HEK293T (cell line): ENCODE measurements at regions of chr7 and their contacts with region 1.

Region 1: GRCh38 chr7:151232091-151232916 is at the start of gene CHPF2:
- DNase-seq: peak; percentile 97

Region 2: GRCh38 chr7:151251328-151251972 is 19.1 kb after region 1 on chr7:
- CTCF ChIA-PET with region 1: interaction called, 12 read pairs
- POLR2A ChIA-PET with region 1: interaction called, 25 read pairs
- DNase-seq: peak; percentile 85

Region 3: GRCh38 chr7:151599401-151600227 is 367.3 kb after region 1 on chr7:
- CTCF ChIA-PET with region 1: no interaction called
- POLR2A ChIA-PET with region 1: no interaction called
- DNase-seq: no peak